ENCODE measurements at regions of chr6 and their contacts with region 1.

Region 1: DNA sequence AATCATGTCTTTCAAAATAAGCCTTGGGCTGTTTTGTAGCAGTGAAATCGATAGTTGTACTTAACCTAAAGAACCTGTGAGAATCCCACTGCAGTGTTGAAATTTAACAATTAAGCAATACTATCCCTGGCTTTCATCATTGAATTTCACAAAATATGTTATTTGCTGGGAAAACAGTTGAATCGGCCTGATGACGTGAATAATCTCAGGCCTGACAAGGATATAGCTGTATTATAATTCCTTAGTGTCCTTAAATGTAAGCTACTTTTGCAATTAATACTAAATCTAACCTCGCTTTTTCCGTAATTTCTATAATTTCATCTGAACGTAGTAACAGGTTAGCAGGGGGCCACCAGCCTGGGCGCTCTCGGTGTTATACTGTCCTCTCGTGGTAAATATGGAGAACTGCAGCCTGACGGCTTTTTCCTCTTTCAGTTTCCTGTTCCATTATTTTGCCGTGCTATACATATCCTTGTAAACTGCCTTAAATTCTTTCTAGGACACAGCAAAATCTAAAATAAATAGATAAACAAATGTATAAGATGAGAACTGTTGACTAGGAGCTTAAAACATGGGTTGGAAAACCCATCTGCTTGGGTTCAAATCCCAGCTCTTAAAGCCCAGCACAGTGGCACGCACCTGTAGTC is 24.0 kb downstream of the MTFR2 start:
- DNase-seq: peak; percentile 61
- H3K4me3 ChIP-seq: peak overlapping the region; percentile 7
- H3K27ac ChIP-seq: no peak overlapping the region
- H3K4me1 ChIP-seq: peaks cover 4% of the 10 kb centered on the region
- H3K27me3 ChIP-seq: no peaks in the 10 kb centered on the region
- CTCF ChIP-seq: peak; percentile 99

Region 2: GRCh38 chr6:135506270-135506997 is 719.7 kb before region 1 on chr6:
- CTCF ChIA-PET with region 1: no interaction called
- POLR2A ChIA-PET with region 1: no interaction called
- intact Hi-C with region 1: loop called (anchors 1 kb)
- DNase-seq: peak; percentile 61
- H3K4me3 ChIP-seq: no peak overlapping the region
- H3K27ac ChIP-seq: no peak overlapping the region
- H3K4me1 ChIP-seq: no peaks in the 10 kb centered on the region
- H3K27me3 ChIP-seq: no peaks in the 10 kb centered on the region
- CTCF ChIP-seq: peak; percentile 70

Region 3: DNA sequence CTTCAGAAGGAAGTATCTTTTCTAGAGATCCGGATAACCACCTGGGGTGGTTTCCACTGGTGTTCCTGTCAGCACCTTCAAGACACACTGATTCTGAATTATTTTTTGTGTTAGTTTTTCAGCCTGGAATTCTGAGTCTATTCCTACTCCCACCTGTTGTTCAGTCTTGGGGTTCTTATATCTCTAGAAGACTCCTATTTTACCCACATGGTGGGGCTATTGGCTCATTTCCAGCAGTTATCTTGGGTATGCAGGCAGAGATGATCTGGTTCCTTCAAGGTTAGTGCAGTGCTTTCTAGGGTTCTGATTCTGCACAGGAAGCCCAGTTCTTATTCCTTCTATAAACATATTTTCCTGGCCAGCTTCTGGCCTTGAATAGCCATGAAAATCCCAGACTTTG is 550.3 kb before region 1 on chr6:
- CTCF ChIA-PET with region 1: no interaction called
- POLR2A ChIA-PET with region 1: no interaction called
- intact Hi-C with region 1: loop called (anchors 1 kb)
- DNase-seq: peak; percentile 74
- H3K4me3 ChIP-seq: no peak overlapping the region
- H3K27ac ChIP-seq: no peak overlapping the region
- H3K4me1 ChIP-seq: peaks cover 16% of the 10 kb centered on the region
- H3K27me3 ChIP-seq: no peaks in the 10 kb centered on the region
- CTCF ChIP-seq: peak; percentile 55

Region 4: DNA sequence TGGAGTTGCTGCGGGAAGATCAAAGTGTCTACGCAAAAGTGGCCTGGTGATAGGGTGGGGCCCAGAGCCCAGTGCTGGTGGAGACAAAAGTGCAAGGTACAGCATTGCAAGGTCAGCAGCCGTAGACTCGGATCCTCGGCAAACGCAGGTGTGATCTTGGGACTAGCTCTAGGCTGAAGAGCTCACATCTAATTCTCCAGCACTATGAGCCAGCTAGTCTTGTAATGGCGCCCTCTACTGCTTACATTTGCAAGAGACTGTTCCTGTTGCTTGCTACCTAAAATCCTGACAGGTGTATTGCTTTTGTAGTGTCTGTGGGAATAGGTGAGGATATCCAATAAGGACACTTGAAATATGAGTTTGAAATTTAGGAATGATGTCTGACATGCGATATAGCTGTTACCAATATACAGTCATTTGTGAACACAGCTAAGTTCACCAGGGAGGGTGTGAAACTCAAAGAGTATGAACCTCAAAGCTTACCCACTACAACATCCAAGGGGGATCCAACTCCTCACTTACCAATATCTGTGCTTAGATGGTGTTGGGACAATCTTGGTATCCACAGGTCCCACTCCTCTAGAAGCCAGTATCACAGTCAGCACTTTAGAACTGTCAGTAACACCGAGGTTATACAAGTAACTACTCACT is 316.3 kb before region 1 on chr6:
- CTCF ChIA-PET with region 1: interaction called, 3 read pairs
- POLR2A ChIA-PET with region 1: no interaction called
- intact Hi-C with region 1: loop called (anchors 10 kb)
- DNase-seq: peak; percentile 60
- H3K4me3 ChIP-seq: no peak overlapping the region
- H3K27ac ChIP-seq: no peak overlapping the region
- H3K4me1 ChIP-seq: no peaks in the 10 kb centered on the region
- H3K27me3 ChIP-seq: peaks cover 4% of the 10 kb centered on the region
- CTCF ChIP-seq: peak; percentile 81

Measured in A673 (cell line).